Heart right ventricle (tissue), 16 donors: ENCODE measurements at regions of chr9 and their contacts with region 1.

Region 1: GRCh38 chr9:79452265-79452664 is 119.5 kb upstream of the TLE4 start:
- DNase-seq: no peak
- ATAC-seq: no peak
- H3K4me3 ChIP-seq: no peak overlapping the region
- H3K27ac ChIP-seq: no peak overlapping the region
- H3K4me1 ChIP-seq: no peaks in the 10 kb centered on the region
- H3K27me3 ChIP-seq: peaks cover 0 to 3% (median 0%) of the 10 kb centered on the region in 7 donors
- CTCF ChIP-seq: no peak

Region 2: DNA sequence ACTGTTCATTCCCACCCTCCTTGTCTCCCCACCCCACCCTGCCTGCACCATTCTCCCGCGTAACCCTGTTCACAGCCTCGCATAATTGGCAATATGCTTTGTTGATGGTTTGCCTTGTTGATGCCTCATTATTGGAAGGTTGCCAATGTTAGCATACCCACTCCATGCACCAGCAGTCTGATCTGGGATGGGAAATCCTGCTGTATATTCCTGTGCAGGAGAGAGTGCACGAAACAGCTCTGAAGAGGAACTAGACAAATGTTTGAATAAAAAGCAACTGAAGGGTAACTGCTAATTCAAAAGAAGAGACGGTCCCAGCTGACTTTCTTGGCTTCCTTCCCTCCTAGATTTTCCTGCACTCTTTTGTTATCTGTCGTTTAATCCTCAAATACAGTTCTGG is 152.2 kb before region 1 on chr9:
- intact Hi-C with region 1: loop called in 1 of 10 experiments (anchors 5 kb)
- DNase-seq: no peak
- ATAC-seq: no peak
- H3K4me3 ChIP-seq: no peak overlapping the region
- H3K27ac ChIP-seq: no peak overlapping the region
- H3K4me1 ChIP-seq: no peaks in the 10 kb centered on the region
- H3K27me3 ChIP-seq: peaks cover 0 to 17% (median 0%) of the 10 kb centered on the region in 7 donors
- CTCF ChIP-seq: no peak

Region 3: DNA sequence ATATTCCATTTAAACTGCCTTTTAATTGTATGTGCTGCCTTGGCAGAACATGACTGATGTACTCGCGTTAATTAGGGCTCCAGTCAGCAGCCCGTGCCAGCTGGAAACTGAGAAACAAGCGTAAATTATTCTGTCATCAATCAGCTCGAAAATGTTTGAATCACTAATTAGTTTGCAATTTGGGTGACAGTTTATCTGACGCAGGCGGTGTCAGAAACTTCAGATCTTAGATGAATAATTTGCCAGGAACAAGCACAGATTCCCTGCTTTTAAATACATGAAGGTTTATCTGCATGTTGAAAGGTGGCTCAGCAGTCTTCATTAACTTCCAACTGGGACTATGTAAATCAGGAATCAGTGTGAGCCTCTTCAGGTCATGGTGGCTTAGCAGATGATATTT is 56.5 kb before region 1 on chr9:
- intact Hi-C with region 1: no loop called
- DNase-seq: no peak
- ATAC-seq: no peak
- H3K4me3 ChIP-seq: no peak overlapping the region
- H3K27ac ChIP-seq: no peak overlapping the region
- H3K4me1 ChIP-seq: no peaks in the 10 kb centered on the region
- H3K27me3 ChIP-seq: peaks cover 0 to 4% (median 0%) of the 10 kb centered on the region in 7 donors
- CTCF ChIP-seq: no peak

Region 4: DNA sequence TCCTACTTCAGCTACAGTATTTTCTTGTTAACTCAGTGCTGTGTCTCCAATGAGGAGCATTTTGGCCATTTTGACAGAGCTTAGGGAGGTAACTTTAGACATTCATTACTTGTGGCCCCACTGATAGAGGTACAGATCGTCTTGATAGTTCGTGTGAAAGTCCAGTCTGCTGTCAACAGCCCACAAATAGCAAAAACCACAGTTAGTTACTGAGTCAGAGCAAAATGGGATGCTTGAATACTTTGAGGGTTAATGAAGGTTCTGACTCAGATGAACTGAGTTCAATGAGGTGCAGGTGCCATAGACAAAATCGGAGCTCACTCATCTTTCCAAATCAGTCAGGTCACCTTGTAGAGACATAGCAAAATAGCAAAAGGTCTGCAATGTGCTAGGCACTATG is 43.6 kb before region 1 on chr9:
- intact Hi-C with region 1: no loop called
- DNase-seq: no peak
- ATAC-seq: no peak
- H3K4me3 ChIP-seq: no peak overlapping the region
- H3K27ac ChIP-seq: no peak overlapping the region
- H3K4me1 ChIP-seq: no peaks in the 10 kb centered on the region
- H3K27me3 ChIP-seq: no peaks in the 10 kb centered on the region
- CTCF ChIP-seq: no peak